PC-9 (cell line): ENCODE measurements at regions of chr10 and their contacts with region 1.

Region 1: DNA sequence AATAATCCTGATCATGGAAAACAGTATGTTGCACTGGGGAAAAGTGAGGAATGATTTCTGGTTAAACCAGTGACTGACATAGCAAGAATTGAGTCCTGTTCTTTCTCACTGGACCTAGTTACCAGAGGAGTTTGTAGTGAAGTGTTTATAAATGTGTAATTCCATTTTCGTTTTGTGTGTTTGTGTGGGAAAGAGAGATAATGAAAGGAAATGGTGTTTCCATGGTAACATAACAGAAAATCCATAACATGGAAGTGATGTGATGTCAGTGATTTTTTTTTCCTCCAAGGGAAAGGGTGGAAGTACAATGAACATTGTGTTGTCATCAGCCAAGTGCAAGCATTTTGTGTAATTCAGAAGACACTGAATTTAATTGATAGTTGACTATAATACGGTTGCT is 283.9 kb downstream of the PLXDC2 start:
- DNase-seq: no peak
- H3K4me3 ChIP-seq: no peak overlapping the region
- H3K27ac ChIP-seq: no peak overlapping the region
- H3K4me1 ChIP-seq: no peaks in the 10 kb centered on the region
- H3K27me3 ChIP-seq: peaks cover 8% of the 10 kb centered on the region; the same call in 1 of the 2 replicates
- CTCF ChIP-seq: no peak

Region 2: DNA sequence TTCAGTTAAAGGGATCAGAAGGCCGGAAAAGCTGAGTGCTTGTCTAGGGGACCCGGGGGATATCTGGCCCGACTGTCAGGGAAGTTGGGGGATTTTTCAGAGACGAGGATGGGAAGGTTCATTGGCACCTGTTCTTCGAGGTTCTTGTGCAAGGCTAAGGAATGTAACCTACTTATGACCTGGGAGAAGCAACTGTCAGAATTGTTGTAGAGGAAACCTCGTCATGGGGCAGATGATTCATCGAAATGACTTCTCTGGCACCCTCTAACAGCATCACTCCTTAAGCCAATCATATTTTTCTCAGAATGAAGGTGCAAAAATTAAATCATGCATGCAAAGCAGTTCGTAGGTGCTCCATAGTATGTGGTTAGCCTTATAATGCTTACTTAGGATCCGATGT is 225.4 kb before region 1 on chr10:
- CTCF ChIA-PET with region 1: no interaction called
- POLR2A ChIA-PET with region 1: no interaction called
- intact Hi-C with region 1: no loop called
- DNase-seq: no peak
- H3K4me3 ChIP-seq: no peak overlapping the region
- H3K27ac ChIP-seq: no peak overlapping the region
- H3K4me1 ChIP-seq: no peaks in the 10 kb centered on the region
- H3K27me3 ChIP-seq: no peaks in the 10 kb centered on the region
- CTCF ChIP-seq: no peak

Region 3: GRCh38 chr10:20075713-20076112 is 24.5 kb before region 1 on chr10:
- CTCF ChIA-PET with region 1: interaction called, 12 read pairs
- POLR2A ChIA-PET with region 1: no interaction called
- intact Hi-C with region 1: no loop called
- DNase-seq: no peak
- H3K4me3 ChIP-seq: no peak overlapping the region
- H3K27ac ChIP-seq: no peak overlapping the region
- H3K4me1 ChIP-seq: no peaks in the 10 kb centered on the region
- H3K27me3 ChIP-seq: no peaks in the 10 kb centered on the region
- CTCF ChIP-seq: no peak

Region 4: GRCh38 chr10:20776384-20777118 is 676.4 kb after region 1 on chr10:
- CTCF ChIA-PET with region 1: no interaction called
- POLR2A ChIA-PET with region 1: no interaction called
- intact Hi-C with region 1: no loop called
- DNase-seq: no peak
- H3K4me3 ChIP-seq: no peak overlapping the region
- H3K27ac ChIP-seq: no peak overlapping the region
- H3K4me1 ChIP-seq: no peaks in the 10 kb centered on the region
- H3K27me3 ChIP-seq: no peaks in the 10 kb centered on the region
- CTCF ChIP-seq: no peak